GM10248 (cell line): ENCODE measurements at regions of chr11 and their contacts with region 1.

Region 1: GRCh38 chr11:22577854-22578253 is 47.8 kb downstream of the FANCF start:
- DNase-seq: no peak
- CTCF ChIP-seq: no peak

Region 2: DNA sequence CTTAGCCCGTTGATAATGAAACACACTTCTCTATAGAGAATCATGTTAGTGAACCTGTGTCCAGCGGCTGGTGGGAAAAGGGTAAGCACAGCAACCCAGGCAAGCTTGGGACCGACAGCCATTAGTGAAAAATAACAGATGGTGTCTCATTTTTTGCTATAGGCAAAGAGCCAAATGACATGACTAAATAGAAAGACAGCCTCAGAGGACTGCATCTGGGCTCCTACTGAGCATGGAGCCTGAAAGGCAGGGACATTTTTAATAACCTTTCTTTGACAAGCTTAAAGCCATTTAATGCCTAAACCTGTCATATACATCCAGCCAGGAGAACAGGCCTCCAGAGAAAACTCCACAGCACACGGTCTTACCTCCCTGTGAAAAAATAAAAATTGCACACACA is 19.2 kb before region 1 on chr11:
- CTCF ChIA-PET with region 1: interaction called, 12 read pairs
- POLR2A ChIA-PET with region 1: no interaction called
- DNase-seq: no peak
- CTCF ChIP-seq: no peak

Region 3: GRCh38 chr11:22567759-22568158 is 10.1 kb before region 1 on chr11:
- CTCF ChIA-PET with region 1: interaction called, 10 read pairs
- POLR2A ChIA-PET with region 1: no interaction called
- DNase-seq: no peak
- CTCF ChIP-seq: no peak